ENCODE measurements at regions of chr4 and their contacts with region 1.

Region 1: GRCh38 chr4:145936142-145936996 is 2.3 kb downstream of the ZNF827 start:
- DNase-seq: peak; percentile 80 to 81
- H3K4me3 ChIP-seq: peak overlapping the region; percentile 81 to 87 (median 85)
- H3K27ac ChIP-seq: peak overlapping the region; percentile 93 to 98 (median 95)
- H3K4me1 ChIP-seq: peaks cover 8 to 13% of the 10 kb centered on the region in 2 donors
- H3K27me3 ChIP-seq: no peaks in the 10 kb centered on the region
- CTCF ChIP-seq: peak in 3 of 6 experiments; percentile 2 to 41 (median 26)
- POLR2A ChIP-seq: peak; percentile 24 to 70

Region 2: GRCh38 chr4:145887241-145887991 is 49.0 kb before region 1 on chr4:
- intact Hi-C with region 1: loop called (anchors 10 kb)
- DNase-seq: peak in 1 of 2 donors; percentile 17
- H3K4me3 ChIP-seq: no peak overlapping the region
- H3K27ac ChIP-seq: peak overlapping the region in 2 of 3 donors; percentile 39 to 64
- H3K4me1 ChIP-seq: peaks cover 18 to 43% of the 10 kb centered on the region in 2 donors
- H3K27me3 ChIP-seq: no peaks in the 10 kb centered on the region
- CTCF ChIP-seq: no peak
- POLR2A ChIP-seq: no peak

Region 3: DNA sequence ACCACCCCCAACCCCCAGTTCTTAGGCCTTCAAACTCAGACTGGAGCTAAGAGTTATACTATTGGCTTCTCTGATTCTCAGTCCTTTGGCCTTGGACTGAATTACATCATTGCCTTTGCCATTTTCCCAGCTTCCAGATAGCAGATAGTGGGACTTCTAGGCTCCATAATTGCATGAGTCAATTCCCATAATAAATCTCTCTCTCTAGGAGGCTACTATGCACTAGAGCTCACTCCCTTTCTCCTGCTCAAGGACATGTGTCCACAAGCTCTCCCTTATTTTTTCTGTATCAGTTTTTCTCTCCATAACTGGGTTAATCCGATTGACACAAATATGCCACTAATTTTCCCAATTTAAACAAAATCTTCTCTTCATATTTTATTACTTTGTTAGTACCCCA is 381.4 kb after region 1 on chr4:
- intact Hi-C with region 1: no loop called
- DNase-seq: no peak
- H3K4me3 ChIP-seq: no peak overlapping the region
- H3K27ac ChIP-seq: no peak overlapping the region
- H3K4me1 ChIP-seq: no peaks in the 10 kb centered on the region
- H3K27me3 ChIP-seq: no peaks in the 10 kb centered on the region
- CTCF ChIP-seq: no peak
- POLR2A ChIP-seq: no peak